ENCODE measurements at regions of chr17 and their contacts with region 1.

Region 1: GRCh38 chr17:80799538-80800480 is 191.8 kb upstream of the CHMP6 start:
- DNase-seq: peak in 1 of 2 donors; percentile 52
- ATAC-seq: no peak
- H3K4me3 ChIP-seq: no peak overlapping the region
- H3K27ac ChIP-seq: no peak overlapping the region
- H3K4me1 ChIP-seq: peaks cover 17% of the 10 kb centered on the region
- H3K27me3 ChIP-seq: no peaks in the 10 kb centered on the region
- CTCF ChIP-seq: no peak

Region 2: DNA sequence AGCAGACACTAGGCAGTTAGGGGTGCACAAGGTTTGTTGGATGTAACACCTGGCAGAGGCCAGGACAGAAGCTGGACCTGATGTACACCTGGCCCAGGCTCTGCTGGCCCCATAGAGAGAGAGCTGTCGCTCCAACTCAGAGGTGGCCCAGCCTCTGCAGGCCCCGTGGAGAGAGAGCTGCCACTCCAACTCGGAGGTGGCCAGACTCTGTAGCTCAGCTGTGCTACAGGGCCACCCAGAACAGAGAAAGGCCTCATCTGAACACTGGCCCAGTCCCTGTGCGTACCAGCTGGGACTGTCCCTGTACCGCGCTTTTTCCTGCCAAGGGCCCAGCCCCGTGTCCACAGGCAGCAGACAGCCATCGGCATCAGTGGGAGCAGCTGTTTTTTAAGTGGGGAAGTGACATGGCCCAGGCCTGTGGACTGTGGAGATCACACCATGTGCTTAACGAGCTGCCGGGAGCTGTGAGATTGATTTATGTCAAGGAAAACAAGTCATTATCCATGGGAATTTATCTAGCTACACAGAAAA is 15.4 kb after region 1 on chr17:
- intact Hi-C with region 1: loop called in 1 of 2 experiments (anchors 2 kb)
- DNase-seq: peak in 1 of 2 donors; percentile 21
- ATAC-seq: peak in 2 of 4 donors; percentile 6 to 15
- H3K4me3 ChIP-seq: no peak overlapping the region
- H3K27ac ChIP-seq: no peak overlapping the region
- H3K4me1 ChIP-seq: peaks cover 7% of the 10 kb centered on the region
- H3K27me3 ChIP-seq: no peaks in the 10 kb centered on the region
- CTCF ChIP-seq: no peak

Region 3: GRCh38 chr17:80899402-80900268 is 99.8 kb after region 1 on chr17:
- intact Hi-C with region 1: no loop called
- DNase-seq: no peak
- ATAC-seq: peak; percentile 57 to 80 (median 64)
- H3K4me3 ChIP-seq: no peak overlapping the region
- H3K27ac ChIP-seq: no peak overlapping the region
- H3K4me1 ChIP-seq: no peaks in the 10 kb centered on the region
- H3K27me3 ChIP-seq: no peaks in the 10 kb centered on the region
- CTCF ChIP-seq: peak; percentile 54